ENCODE measurements at regions of chr13 and their contacts with region 1.

Region 1: DNA sequence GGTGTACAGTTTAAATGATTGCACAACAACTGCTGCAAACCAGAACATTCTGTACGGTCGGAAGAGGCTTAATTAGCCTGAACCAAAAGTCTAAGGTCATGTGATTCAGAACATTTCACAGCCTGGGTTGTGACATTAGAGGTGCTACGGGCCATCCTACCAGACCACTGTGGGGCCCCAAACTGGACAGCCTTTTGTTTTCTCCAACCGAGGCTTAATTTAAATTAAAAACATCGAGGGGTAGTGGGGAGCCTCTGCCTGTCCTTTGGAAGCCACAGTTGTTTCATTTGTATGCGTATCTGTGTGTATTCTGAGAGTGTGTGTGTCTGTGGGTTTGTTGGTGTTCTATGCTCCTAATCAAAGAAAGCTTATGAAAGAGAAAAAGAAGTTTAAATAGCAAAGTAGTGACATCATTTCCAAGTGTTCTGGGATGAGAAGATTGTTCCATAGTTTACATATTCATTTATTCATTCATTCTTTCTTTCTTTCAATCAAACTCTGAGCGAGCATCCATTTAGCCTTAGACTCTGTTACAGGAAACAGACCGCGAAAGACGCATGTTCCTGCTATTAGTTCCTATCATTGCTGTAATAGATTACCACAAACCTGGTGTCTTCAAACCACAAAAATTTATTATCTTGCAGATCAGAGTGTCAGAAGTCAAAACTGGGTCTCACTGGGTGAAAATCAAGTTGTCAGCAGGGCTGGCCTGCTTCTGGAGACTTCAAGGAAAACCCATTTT is 444.8 kb downstream of the FOXO1 start:
- DNase-seq: peak; percentile 86
- H3K4me3 Mint-ChIP-seq: peak overlapping the region; percentile 28
- H3K27ac Mint-ChIP-seq: peak overlapping the region; percentile 95
- H3K4me1 Mint-ChIP-seq: peaks cover 38% of the 10 kb centered on the region
- H3K27me3 Mint-ChIP-seq: no peaks in the 10 kb centered on the region
- CTCF ChIP-seq: no peak

Region 2: DNA sequence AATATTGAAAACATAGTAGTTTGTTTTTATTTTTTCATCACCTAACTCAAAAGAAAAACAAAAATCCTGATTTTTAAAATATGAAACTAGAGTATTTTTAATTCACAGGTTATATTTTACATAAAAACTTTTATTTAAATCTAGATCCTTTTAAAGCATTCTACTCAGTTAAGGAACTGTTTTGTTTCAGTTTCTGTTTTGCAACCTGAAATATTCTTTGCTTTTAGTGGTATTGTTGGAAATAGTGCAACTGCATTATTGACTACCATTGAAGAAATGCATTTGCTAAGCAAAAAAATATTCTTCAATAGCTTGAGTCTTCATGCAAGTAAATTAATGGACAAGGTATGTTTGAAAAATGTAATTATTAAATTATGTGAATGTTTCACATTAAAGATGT is 522.4 kb before region 1 on chr13:
- CTCF ChIA-PET with region 1: no interaction called
- POLR2A ChIA-PET with region 1: no interaction called
- intact Hi-C with region 1: no loop called
- DNase-seq: no peak
- H3K4me3 Mint-ChIP-seq: no peak overlapping the region
- H3K27ac Mint-ChIP-seq: no peak overlapping the region
- H3K4me1 Mint-ChIP-seq: no peaks in the 10 kb centered on the region
- H3K27me3 Mint-ChIP-seq: no peaks in the 10 kb centered on the region
- CTCF ChIP-seq: no peak

Region 3: DNA sequence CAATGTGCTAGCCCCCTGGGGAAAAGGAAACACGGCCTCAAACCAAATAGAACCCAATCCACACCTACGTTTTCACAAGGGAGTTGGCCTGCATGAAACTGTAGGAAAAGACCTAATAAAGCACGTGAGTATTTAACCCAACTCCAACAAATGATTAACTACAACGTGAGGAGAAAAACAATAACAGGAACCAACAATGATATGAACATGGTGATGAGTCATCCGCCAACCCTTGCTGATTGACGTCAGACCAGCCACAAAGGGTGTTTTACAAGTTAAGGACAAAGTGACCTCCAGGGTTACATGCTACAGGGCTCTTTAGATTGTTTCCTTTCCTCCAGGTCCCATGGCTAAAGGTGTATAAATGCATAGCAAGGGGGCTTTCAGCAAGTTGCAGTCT is 105.6 kb before region 1 on chr13:
- CTCF ChIA-PET with region 1: no interaction called
- POLR2A ChIA-PET with region 1: interaction called, 13 read pairs
- intact Hi-C with region 1: no loop called
- DNase-seq: peak; percentile 96
- H3K4me3 Mint-ChIP-seq: no peak overlapping the region
- H3K27ac Mint-ChIP-seq: peak overlapping the region; percentile 99
- H3K4me1 Mint-ChIP-seq: peaks cover 69% of the 10 kb centered on the region
- H3K27me3 Mint-ChIP-seq: no peaks in the 10 kb centered on the region
- CTCF ChIP-seq: no peak

Region 4: GRCh38 chr13:40190641-40191100 is 31.0 kb before region 1 on chr13:
- CTCF ChIA-PET with region 1: no interaction called
- POLR2A ChIA-PET with region 1: interaction called, 18 read pairs
- intact Hi-C with region 1: no loop called
- DNase-seq: peak; percentile 78
- H3K4me3 Mint-ChIP-seq: peak overlapping the region; percentile 10
- H3K27ac Mint-ChIP-seq: peak overlapping the region; percentile 70
- H3K4me1 Mint-ChIP-seq: peaks cover 23% of the 10 kb centered on the region
- H3K27me3 Mint-ChIP-seq: no peaks in the 10 kb centered on the region
- CTCF ChIP-seq: no peak

Region 5: GRCh38 chr13:40206241-40207000 is 15.2 kb before region 1 on chr13:
- CTCF ChIA-PET with region 1: interaction called, 6 read pairs
- POLR2A ChIA-PET with region 1: interaction called, 11 read pairs
- intact Hi-C with region 1: no loop called
- DNase-seq: peak; percentile 20
- H3K4me3 Mint-ChIP-seq: no peak overlapping the region
- H3K27ac Mint-ChIP-seq: peak overlapping the region; percentile 82
- H3K4me1 Mint-ChIP-seq: peaks cover 20% of the 10 kb centered on the region
- H3K27me3 Mint-ChIP-seq: no peaks in the 10 kb centered on the region
- CTCF ChIP-seq: no peak

Region 6: GRCh38 chr13:40233731-40234195 is 12.1 kb after region 1 on chr13:
- CTCF ChIA-PET with region 1: interaction called, 5 read pairs
- POLR2A ChIA-PET with region 1: interaction called, 23 read pairs
- intact Hi-C with region 1: no loop called
- DNase-seq: peak; percentile 24
- H3K4me3 Mint-ChIP-seq: no peak overlapping the region
- H3K27ac Mint-ChIP-seq: no peak overlapping the region
- H3K4me1 Mint-ChIP-seq: peaks cover 66% of the 10 kb centered on the region
- H3K27me3 Mint-ChIP-seq: no peaks in the 10 kb centered on the region
- CTCF ChIP-seq: no peak

Region 7: GRCh38 chr13:40259899-40260298 is 38.3 kb after region 1 on chr13:
- CTCF ChIA-PET with region 1: no interaction called
- POLR2A ChIA-PET with region 1: no interaction called
- intact Hi-C with region 1: no loop called
- DNase-seq: no peak
- H3K4me3 Mint-ChIP-seq: no peak overlapping the region
- H3K27ac Mint-ChIP-seq: no peak overlapping the region
- H3K4me1 Mint-ChIP-seq: peaks cover 10% of the 10 kb centered on the region
- H3K27me3 Mint-ChIP-seq: no peaks in the 10 kb centered on the region
- CTCF ChIP-seq: no peak